Endothelial cell of umbilical vein (primary cell): ENCODE measurements at regions of chr3 and their contacts with region 1.

Region 1: GRCh38 chr3:47250309-47251060 is 32.1 kb downstream of the KIF9 start:
- DNase-seq: peak; percentile 43
- H3K4me3 ChIP-seq: no peak overlapping the region
- H3K27ac ChIP-seq: no peak overlapping the region
- H3K4me1 ChIP-seq: no peaks in the 10 kb centered on the region
- H3K27me3 ChIP-seq: no peaks in the 10 kb centered on the region
- CTCF ChIP-seq: peak; percentile 37 to 56
- POLR2A ChIP-seq: no peak

Region 2: DNA sequence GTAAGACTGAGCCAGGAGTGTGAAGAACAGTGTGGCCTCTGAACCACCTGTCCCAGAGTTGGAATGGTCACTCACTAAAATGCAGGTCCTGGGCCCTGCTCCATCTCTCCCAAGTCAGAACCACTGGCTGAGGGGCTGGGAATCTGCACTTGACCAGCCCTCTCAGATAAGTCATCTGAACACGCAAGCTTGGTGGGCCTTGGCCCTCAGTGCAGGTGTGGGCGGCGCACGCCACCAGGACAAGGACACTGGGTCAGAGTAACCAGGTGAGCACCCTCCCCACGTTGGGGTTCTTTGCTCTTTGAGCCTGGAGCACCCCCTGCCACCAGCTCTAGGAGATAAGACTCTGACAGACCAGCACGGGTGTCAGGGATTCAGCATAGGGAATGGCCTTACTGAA is 10.6 kb before region 1 on chr3:
- CTCF ChIA-PET with region 1: interaction called, 4 read pairs
- POLR2A ChIA-PET with region 1: no interaction called
- dilution Hi-C with region 1: no loop called
- intact Hi-C with region 1: loop called (anchors 1 kb)
- DNase-seq: no peak
- H3K4me3 ChIP-seq: no peak overlapping the region
- H3K27ac ChIP-seq: no peak overlapping the region
- H3K4me1 ChIP-seq: no peaks in the 10 kb centered on the region
- H3K27me3 ChIP-seq: no peaks in the 10 kb centered on the region
- CTCF ChIP-seq: no peak
- POLR2A ChIP-seq: no peak

Region 3: GRCh38 chr3:47282424-47283192 is 32.1 kb after region 1 on chr3 and contains the starts of genes KIF9 and KLHL18:
- CTCF ChIA-PET with region 1: interaction called, 3 read pairs
- POLR2A ChIA-PET with region 1: no interaction called
- dilution Hi-C with region 1: no loop called
- intact Hi-C with region 1: loop called (anchors 2 kb)
- DNase-seq: peak; percentile 91
- H3K4me3 ChIP-seq: peak within 1 kb of the TSS; percentile 63 to 93 (median 82)
- H3K27ac ChIP-seq: peak within 1 kb of the TSS; percentile 80
- H3K4me1 ChIP-seq: peaks cover 7% of the 10 kb centered on the region
- H3K27me3 ChIP-seq: no peaks in the 10 kb centered on the region
- CTCF ChIP-seq: no peak
- POLR2A ChIP-seq: peak; percentile 91
- total RNA-seq, gene KIF9: 20.7 and 22.4 TPM in 2 replicates
- total RNA-seq, gene KLHL18: 43.4 and 47.2 TPM in 2 replicates

Region 4: GRCh38 chr3:47315069-47315647 is 64.7 kb after region 1 on chr3:
- CTCF ChIA-PET with region 1: interaction called, 10 read pairs
- POLR2A ChIA-PET with region 1: no interaction called
- dilution Hi-C with region 1: no loop called
- intact Hi-C with region 1: no loop called
- DNase-seq: peak; percentile 79
- H3K4me3 ChIP-seq: peak overlapping the region in 1 of 3 experiments; percentile 8
- H3K27ac ChIP-seq: no peak overlapping the region
- H3K4me1 ChIP-seq: peaks cover 11% of the 10 kb centered on the region
- H3K27me3 ChIP-seq: no peaks in the 10 kb centered on the region
- CTCF ChIP-seq: no peak
- POLR2A ChIP-seq: no peak

Region 5: DNA sequence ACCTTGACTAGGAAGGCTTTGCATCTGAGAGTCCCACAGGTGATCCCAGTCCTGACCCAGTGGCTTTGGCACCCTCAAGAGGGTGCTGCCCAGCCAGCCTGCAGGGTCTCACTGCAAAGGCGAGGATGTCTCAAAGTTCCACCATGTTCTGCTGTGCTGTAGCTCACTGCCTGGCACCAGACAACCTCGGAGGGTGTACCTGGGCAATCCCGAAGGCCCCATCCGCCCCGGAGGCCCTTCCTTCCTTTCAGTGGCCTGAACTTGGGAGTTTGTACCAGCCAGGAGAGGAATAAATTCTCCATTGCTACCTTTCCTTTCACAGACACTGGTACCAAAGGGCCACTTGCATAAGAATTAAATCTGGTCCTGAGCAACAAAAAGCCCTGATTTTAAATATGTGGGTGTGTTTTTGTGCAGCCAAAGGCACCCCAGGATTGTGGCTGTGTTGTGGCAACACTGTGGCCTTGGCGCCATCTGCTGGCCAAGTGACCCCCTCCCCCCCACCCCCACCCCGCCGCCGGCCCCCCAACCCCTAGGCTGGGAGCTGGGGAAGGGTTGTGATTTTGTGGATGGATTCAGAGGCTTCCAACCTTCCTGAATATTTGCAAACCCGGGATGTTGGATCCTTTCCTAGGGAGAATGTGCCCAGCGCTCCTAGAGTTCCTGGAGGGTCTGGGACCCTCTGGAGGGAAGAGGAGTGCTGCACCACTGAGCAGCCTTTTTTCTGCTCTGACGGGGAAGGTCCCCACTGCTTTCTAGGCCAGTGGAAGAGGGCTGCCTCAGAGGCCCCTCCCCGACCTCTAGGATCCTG is 120.6 kb after region 1 on chr3:
- CTCF ChIA-PET with region 1: interaction called, 9 read pairs
- POLR2A ChIA-PET with region 1: no interaction called
- dilution Hi-C with region 1: no loop called
- intact Hi-C with region 1: loop called (anchors 1 kb)
- DNase-seq: no peak
- H3K4me3 ChIP-seq: no peak overlapping the region
- H3K27ac ChIP-seq: no peak overlapping the region
- H3K4me1 ChIP-seq: no peaks in the 10 kb centered on the region
- H3K27me3 ChIP-seq: no peaks in the 10 kb centered on the region
- CTCF ChIP-seq: peak in 1 of 2 donors; percentile 41
- POLR2A ChIP-seq: no peak